AG04450 (cell line): ENCODE measurements at regions of chr1 and their contacts with region 1.

Region 1: DNA sequence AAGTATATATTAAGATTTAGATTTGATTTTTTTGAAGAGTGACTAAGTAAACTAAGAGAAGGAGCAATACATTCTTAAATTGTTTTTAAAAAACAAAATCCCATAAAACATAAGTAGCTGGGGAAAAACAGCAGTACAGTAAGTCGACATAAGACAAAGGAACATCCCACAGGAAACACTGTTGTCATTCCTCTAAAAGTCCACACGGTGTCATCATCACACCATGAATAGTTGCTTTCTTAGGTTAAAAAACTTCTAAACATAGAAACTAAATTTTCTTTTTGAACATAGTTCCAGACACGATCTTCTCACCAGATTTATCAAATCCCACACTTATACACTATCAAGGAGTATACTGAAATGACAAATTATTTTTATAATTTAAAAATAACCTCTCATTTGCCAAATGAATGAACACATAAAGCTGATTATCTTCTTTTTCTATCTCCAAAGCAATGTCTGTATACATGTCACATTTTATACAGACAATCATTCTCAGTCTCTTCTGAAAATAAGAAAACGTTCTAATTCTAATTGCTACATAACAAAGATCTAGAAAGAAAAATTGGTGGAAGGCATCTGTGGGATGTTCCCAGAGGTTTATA is 15.8 kb downstream of the ODF2L start:
- DNase-seq: peak; percentile 60
- H3K4me3 ChIP-seq: no peak overlapping the region
- H3K27ac ChIP-seq: no peak overlapping the region
- H3K27me3 ChIP-seq: no peaks in the 10 kb centered on the region
- CTCF ChIP-seq: peak; percentile 74

Region 2: GRCh38 chr1:86339014-86339812 is 41.1 kb before region 1 on chr1:
- CTCF ChIA-PET with region 1: no interaction called
- POLR2A ChIA-PET with region 1: no interaction called
- DNase-seq: no peak
- H3K4me3 ChIP-seq: no peak overlapping the region
- H3K27ac ChIP-seq: no peak overlapping the region
- H3K27me3 ChIP-seq: no peaks in the 10 kb centered on the region
- CTCF ChIP-seq: no peak

Region 3: GRCh38 chr1:86499987-86500593 is 119.7 kb after region 1 on chr1:
- CTCF ChIA-PET with region 1: interaction called, 28 read pairs
- POLR2A ChIA-PET with region 1: no interaction called
- DNase-seq: no peak
- H3K4me3 ChIP-seq: no peak overlapping the region
- H3K27ac ChIP-seq: no peak overlapping the region
- H3K27me3 ChIP-seq: peaks cover 7% of the 10 kb centered on the region
- CTCF ChIP-seq: peak; percentile 67

Region 4: GRCh38 chr1:86507935-86508582 is 127.7 kb after region 1 on chr1:
- CTCF ChIA-PET with region 1: interaction called, 29 read pairs
- POLR2A ChIA-PET with region 1: no interaction called
- DNase-seq: peak; percentile 11
- H3K4me3 ChIP-seq: no peak overlapping the region
- H3K27ac ChIP-seq: no peak overlapping the region
- H3K27me3 ChIP-seq: peaks cover 8% of the 10 kb centered on the region
- CTCF ChIP-seq: peak; percentile 52

Region 5: DNA sequence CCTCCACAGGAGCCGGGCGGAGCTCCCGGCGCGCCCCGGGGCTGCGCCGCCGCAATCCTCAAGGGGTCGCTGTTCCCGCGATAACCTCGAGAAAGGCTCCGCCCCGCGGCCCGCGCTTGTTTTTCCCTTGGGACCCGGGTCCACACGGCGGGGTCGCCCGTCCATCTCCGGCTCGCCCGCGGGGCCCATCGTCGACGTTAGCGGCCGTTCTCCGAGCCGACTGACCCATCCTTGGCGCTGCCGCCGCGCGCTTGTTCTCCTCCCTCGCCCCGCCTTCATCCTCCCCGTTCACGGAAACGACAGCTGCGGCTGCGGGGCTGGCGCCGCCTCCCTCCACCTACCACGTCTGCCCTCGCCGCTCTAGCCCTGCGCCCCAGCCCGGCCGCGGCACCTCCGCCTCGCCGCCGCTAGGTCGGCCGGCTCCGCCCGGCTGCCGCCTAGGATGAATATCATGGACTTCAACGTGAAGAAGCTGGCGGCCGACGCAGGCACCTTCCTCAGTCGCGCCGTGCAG is 324.2 kb after region 1 on chr1 and contains the start of gene SH3GLB1:
- CTCF ChIA-PET with region 1: interaction called, 11 read pairs
- POLR2A ChIA-PET with region 1: no interaction called
- DNase-seq: peak; percentile 61
- H3K4me3 ChIP-seq: peak within 1 kb of the TSS; percentile 83
- H3K27ac ChIP-seq: peak within 1 kb of the TSS; percentile 91
- H3K27me3 ChIP-seq: no peaks in the 10 kb centered on the region
- CTCF ChIP-seq: peak; percentile 84
- polyA plus RNA-seq, gene SH3GLB1: 61.3 and 75.9 TPM in 2 replicates

Region 6: GRCh38 chr1:86714159-86714558 is 333.8 kb after region 1 on chr1:
- CTCF ChIA-PET with region 1: interaction called, 10 read pairs
- POLR2A ChIA-PET with region 1: no interaction called
- DNase-seq: no peak
- H3K4me3 ChIP-seq: no peak overlapping the region
- H3K27ac ChIP-seq: no peak overlapping the region
- H3K27me3 ChIP-seq: no peaks in the 10 kb centered on the region
- CTCF ChIP-seq: no peak